Activated CD8-positive, alpha-beta T cell treated with anti-CD3 and anti-CD28 coated beads, Interleukin-2, amount 10 ng/mL, durations not matched to agents 7 days and 5 days (primary cell): ENCODE measurements at regions of chr16 and their contacts with region 1.

Region 1: DNA sequence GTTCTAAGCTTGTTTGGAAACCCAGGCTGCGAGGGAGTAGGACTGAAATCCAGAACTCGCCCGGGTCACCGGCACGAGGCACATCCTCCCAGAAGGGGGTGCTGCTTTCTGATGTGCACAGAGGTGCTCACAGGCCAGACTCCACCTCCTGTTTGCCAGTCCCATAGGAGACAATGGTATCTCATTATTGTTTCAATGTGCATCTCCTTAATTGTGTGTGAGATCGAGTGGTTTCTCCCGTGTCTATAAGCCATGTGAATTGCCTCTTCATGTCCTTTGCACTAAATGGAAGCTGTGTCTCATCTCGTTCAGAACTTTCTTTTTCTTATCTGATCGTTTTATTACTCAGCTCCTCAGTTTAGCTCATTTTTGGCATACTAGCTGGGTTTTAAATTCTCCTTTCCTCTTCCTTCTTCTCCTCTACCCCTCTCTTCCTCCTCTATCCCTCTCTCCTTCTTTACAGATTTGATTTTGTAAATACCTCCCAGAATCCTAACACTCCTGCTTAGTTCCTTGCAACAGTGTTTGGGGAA is 32.1 kb upstream of the PRKCB start:
- DNase-seq: peak; percentile 85
- ATAC-seq: peak; percentile 98
- H3K4me3 Mint-ChIP-seq: no peak overlapping the region
- H3K27ac Mint-ChIP-seq: no peak overlapping the region
- H3K4me1 Mint-ChIP-seq: peaks cover 25% of the 10 kb centered on the region
- H3K27me3 Mint-ChIP-seq: peaks cover 2% of the 10 kb centered on the region

Region 2: GRCh38 chr16:23836404-23837311 is 33.0 kb after region 1 on chr16:
- CTCF ChIA-PET with region 1: interaction called, 29 read pairs
- POLR2A ChIA-PET with region 1: no interaction called
- DNase-seq: peak; percentile 76
- ATAC-seq: peak; percentile 54
- H3K4me3 Mint-ChIP-seq: peak overlapping the region; percentile 98
- H3K27ac Mint-ChIP-seq: peak overlapping the region; percentile 90
- H3K4me1 Mint-ChIP-seq: peaks cover 62% of the 10 kb centered on the region
- H3K27me3 Mint-ChIP-seq: no peaks in the 10 kb centered on the region

Region 3: GRCh38 chr16:23858542-23858941 is 54.9 kb after region 1 on chr16:
- CTCF ChIA-PET with region 1: interaction called, 16 read pairs
- POLR2A ChIA-PET with region 1: no interaction called
- DNase-seq: no peak
- ATAC-seq: no peak
- H3K4me3 Mint-ChIP-seq: no peak overlapping the region
- H3K27ac Mint-ChIP-seq: no peak overlapping the region
- H3K4me1 Mint-ChIP-seq: peaks cover 65% of the 10 kb centered on the region
- H3K27me3 Mint-ChIP-seq: no peaks in the 10 kb centered on the region

Region 4: GRCh38 chr16:23902748-23903414 is 99.2 kb after region 1 on chr16:
- CTCF ChIA-PET with region 1: interaction called, 12 read pairs
- POLR2A ChIA-PET with region 1: no interaction called
- DNase-seq: no peak
- ATAC-seq: no peak
- H3K4me3 Mint-ChIP-seq: no peak overlapping the region
- H3K27ac Mint-ChIP-seq: no peak overlapping the region
- H3K4me1 Mint-ChIP-seq: peaks cover 44% of the 10 kb centered on the region
- H3K27me3 Mint-ChIP-seq: no peaks in the 10 kb centered on the region

Region 5: GRCh38 chr16:23959072-23959751 is 155.6 kb after region 1 on chr16:
- CTCF ChIA-PET with region 1: no interaction called
- POLR2A ChIA-PET with region 1: no interaction called
- DNase-seq: peak; percentile 20
- ATAC-seq: peak; percentile 56
- H3K4me3 Mint-ChIP-seq: peak overlapping the region; percentile 19
- H3K27ac Mint-ChIP-seq: peak overlapping the region; percentile 45
- H3K4me1 Mint-ChIP-seq: peaks cover 54% of the 10 kb centered on the region
- H3K27me3 Mint-ChIP-seq: no peaks in the 10 kb centered on the region

Region 6: DNA sequence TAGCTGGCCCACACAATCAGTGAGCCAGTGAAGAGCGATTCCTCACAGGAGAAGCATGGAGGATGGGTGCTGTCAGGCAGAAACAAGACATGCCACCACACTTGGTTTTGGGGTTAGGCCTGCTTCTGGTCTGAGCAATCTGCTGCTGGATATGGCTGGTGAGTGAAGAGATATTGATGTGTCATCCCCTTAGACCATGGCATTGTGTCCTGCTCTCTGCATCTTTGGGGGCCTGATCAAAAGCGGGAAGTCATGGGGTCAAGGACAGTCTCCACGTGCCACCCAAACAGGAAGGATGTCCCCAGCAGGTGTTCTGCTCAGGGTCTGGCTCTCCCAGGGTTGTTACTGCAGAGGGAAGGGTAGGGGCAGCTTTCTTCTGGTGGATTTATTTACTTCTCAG is 172.9 kb after region 1 on chr16:
- CTCF ChIA-PET with region 1: interaction called, 10 read pairs
- POLR2A ChIA-PET with region 1: no interaction called
- DNase-seq: peak; percentile 53
- ATAC-seq: peak; percentile 62
- H3K4me3 Mint-ChIP-seq: no peak overlapping the region
- H3K27ac Mint-ChIP-seq: peak overlapping the region; percentile 68
- H3K4me1 Mint-ChIP-seq: peaks cover 40% of the 10 kb centered on the region
- H3K27me3 Mint-ChIP-seq: no peaks in the 10 kb centered on the region

Region 7: GRCh38 chr16:24041826-24042631 is 238.4 kb after region 1 on chr16:
- CTCF ChIA-PET with region 1: interaction called, 126 read pairs
- POLR2A ChIA-PET with region 1: no interaction called
- DNase-seq: peak; percentile 86
- ATAC-seq: peak; percentile 87
- H3K4me3 Mint-ChIP-seq: no peak overlapping the region
- H3K27ac Mint-ChIP-seq: no peak overlapping the region
- H3K4me1 Mint-ChIP-seq: peaks cover 11% of the 10 kb centered on the region
- H3K27me3 Mint-ChIP-seq: no peaks in the 10 kb centered on the region